ENCODE measurements at regions of chr19 and their contacts with region 1.

Region 1: GRCh38 chr19:4400135-4400936 is at the start of gene SH3GL1:
- DNase-seq: peak; percentile 94
- H3K4me3 Mint-ChIP-seq: peak within 1 kb of the TSS; percentile 94
- H3K27ac Mint-ChIP-seq: peak within 1 kb of the TSS; percentile 93
- H3K4me1 Mint-ChIP-seq: peaks cover 73% of the 10 kb centered on the region
- H3K27me3 Mint-ChIP-seq: no peaks in the 10 kb centered on the region
- total RNA-seq, gene SH3GL1: 31.7 to 32.1 TPM

Region 2: DNA sequence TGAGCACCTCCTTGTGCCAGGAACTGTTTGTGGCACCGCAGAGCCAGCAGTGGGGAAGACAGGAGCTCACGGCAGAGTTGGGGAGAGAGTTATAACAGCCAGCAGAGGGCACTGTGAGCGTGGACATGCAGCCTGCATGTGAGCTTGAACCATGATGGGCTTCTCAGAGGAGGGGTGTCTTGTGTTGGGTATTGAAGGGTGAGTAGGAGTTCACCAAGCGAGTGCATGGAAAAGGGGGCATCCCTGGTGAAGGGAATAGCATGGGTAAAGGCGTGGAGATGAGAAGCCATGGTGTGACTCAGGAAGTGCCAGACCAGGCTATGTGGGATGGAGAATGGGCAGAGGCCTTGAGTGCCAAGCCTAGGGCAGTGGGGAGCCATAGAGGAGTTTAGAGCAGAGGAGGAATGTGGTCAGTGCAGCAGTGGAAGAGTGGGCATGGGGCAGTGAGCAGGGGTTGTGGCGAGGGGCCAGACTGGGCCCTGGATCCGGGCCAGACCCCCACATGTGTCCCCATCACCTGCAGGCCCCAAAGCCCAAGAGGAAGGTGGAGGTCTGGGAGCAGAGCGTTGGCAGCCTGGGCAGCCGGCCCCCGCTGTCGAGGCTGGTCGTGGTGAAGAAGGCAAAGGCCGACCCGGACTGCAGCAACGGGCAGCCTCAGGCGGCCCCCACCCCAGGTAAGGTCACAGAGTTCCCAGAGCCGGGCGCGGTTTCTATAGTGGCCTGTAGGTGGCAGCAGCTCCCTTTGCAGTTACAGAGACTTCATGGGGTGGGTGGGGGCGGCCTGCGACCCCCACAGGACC is 133.0 kb before region 1 on chr19:
- CTCF ChIA-PET with region 1: interaction called, 6 read pairs
- intact Hi-C with region 1: loop called (anchors 1 kb)
- DNase-seq: peak; percentile 79
- H3K4me3 Mint-ChIP-seq: no peak overlapping the region
- H3K27ac Mint-ChIP-seq: no peak overlapping the region
- H3K4me1 Mint-ChIP-seq: peaks cover 20% of the 10 kb centered on the region
- H3K27me3 Mint-ChIP-seq: no peaks in the 10 kb centered on the region

Region 3: DNA sequence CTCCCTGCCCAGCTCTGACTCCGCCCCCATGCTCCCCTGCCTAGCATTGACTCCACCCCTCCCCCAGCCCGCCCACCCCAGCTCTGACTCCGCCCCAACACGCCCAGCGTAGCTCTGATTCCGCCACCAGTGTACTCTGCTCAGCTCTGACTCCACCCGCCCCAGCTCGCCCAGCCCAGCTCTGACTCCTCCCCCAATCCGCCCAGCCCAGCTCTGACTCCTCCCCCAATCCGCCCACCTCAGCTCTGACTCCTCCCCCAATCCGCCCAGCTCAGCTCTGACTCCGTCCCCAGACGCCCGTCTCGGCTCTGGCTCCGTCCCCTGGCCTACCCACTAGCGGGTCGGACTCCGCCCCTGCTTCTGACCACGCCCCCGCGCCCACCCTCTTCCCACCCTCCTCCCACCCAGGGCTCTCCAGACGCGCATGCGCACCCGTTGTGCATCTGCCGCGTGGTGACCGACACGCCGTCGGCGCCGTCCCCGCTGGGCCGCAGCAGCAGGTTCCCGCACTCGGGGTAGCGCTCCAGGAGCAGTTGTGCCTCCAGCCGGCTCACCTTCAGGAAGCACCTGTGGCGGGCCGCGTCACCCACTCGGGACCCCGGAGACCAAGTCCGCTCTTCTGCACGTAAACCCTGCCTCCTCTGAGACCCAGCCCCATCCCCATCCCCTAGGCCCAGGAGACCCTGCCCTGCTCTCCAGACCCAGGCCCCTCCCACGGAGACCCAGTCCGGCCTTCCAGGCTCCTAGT is 71.9 kb before region 1 on chr19:
- CTCF ChIA-PET with region 1: no interaction called
- intact Hi-C with region 1: loop called (anchors 1 kb)
- DNase-seq: peak; percentile 97
- H3K4me3 Mint-ChIP-seq: peak overlapping the region; percentile 87
- H3K27ac Mint-ChIP-seq: peak overlapping the region; percentile 84
- H3K4me1 Mint-ChIP-seq: peaks cover 27% of the 10 kb centered on the region
- H3K27me3 Mint-ChIP-seq: no peaks in the 10 kb centered on the region

Region 4: DNA sequence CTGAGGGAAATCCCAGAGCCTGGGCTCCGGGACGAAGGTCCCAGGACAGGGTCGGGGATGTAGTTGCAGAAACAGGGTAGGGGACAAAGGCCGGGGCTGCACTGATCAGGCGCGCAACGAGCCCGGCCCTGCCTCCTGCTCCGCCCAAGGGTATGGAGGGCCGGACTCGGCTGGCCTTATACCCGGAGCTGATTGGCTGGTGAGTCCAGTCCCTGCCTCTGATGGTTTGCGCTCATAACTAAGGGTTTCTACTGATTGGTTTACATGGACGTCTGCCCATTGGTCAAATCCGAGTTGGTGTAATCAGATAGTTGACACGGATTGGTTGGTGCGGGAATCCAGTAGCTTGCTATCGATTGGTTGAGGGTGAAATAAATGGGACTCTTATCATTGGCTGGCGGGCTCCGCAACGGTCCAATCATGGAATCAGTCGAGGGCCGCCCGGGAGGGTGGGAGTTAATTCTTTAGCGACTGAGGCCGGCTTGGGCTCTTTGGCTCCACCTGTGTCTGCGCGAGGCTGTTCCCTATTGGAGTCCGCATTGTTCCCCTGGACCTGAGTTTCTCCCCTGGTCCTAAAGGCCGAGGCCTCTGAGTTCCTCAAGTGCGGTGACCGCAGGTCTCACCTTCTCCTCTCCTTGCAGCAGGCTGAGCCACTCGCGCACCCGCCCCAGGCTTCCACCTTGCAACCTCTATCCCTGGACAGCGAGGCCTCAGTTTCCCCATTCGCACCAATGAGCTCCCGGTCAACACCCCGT is 57.5 kb before region 1 on chr19:
- CTCF ChIA-PET with region 1: interaction called, 7 read pairs
- intact Hi-C with region 1: loop called (anchors 1 kb)
- DNase-seq: peak; percentile 97
- H3K4me3 Mint-ChIP-seq: peak overlapping the region; percentile 94
- H3K27ac Mint-ChIP-seq: peak overlapping the region; percentile 94
- H3K4me1 Mint-ChIP-seq: peaks cover 27% of the 10 kb centered on the region
- H3K27me3 Mint-ChIP-seq: no peaks in the 10 kb centered on the region

Region 5: DNA sequence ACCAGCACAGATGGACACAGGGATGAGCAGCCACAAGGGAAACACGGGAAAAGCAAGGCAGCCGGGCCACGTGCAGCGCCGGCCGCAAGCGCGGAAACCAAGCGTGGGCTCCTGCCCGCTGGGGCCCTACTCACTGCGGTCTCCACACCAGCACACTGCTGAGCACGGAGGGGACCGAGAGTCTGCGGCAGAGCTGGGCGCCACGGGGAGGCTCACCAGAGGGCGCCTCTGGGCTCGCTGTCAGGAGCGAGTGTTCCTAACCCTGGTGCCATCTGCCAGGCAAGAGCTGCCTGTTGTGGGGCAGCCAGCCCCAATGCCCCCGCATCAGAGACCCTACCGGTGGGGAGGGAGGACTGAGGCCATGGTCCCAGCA is 30.5 kb before region 1 on chr19:
- CTCF ChIA-PET with region 1: interaction called, 7 read pairs
- intact Hi-C with region 1: loop called (anchors 1 kb)
- DNase-seq: peak; percentile 81
- H3K4me3 Mint-ChIP-seq: peak overlapping the region; percentile 78
- H3K27ac Mint-ChIP-seq: peak overlapping the region; percentile 96
- H3K4me1 Mint-ChIP-seq: peaks cover 43% of the 10 kb centered on the region
- H3K27me3 Mint-ChIP-seq: no peaks in the 10 kb centered on the region

Region 6: GRCh38 chr19:4379355-4380253 is 20.7 kb before region 1 on chr19:
- CTCF ChIA-PET with region 1: interaction called, 9 read pairs
- intact Hi-C with region 1: loop called (anchors 1 kb)
- DNase-seq: peak; percentile 56
- H3K4me3 Mint-ChIP-seq: peak overlapping the region; percentile 55
- H3K27ac Mint-ChIP-seq: peak overlapping the region; percentile 80
- H3K4me1 Mint-ChIP-seq: peaks cover 63% of the 10 kb centered on the region
- H3K27me3 Mint-ChIP-seq: no peaks in the 10 kb centered on the region

Region 7: GRCh38 chr19:4457654-4458395 is 57.5 kb after region 1 on chr19 and contains the start of gene UBXN6:
- CTCF ChIA-PET with region 1: no interaction called
- intact Hi-C with region 1: loop called (anchors 1 kb)
- DNase-seq: peak; percentile 99
- H3K4me3 Mint-ChIP-seq: peak within 1 kb of the TSS; percentile 86
- H3K27ac Mint-ChIP-seq: peak within 1 kb of the TSS; percentile 85
- H3K4me1 Mint-ChIP-seq: peaks cover 12% of the 10 kb centered on the region
- H3K27me3 Mint-ChIP-seq: no peaks in the 10 kb centered on the region
- total RNA-seq, gene UBXN6: 28.7 to 36.2 TPM

Measured in activated naive CD4-positive, alpha-beta T cell treated with anti-CD3 and anti-CD28 coated beads for 36 hours (primary cell).